ENCODE measurements at regions of chr15 and their contacts with region 1.

Region 1: GRCh38 chr15:58269455-58270414 is 131.6 kb downstream of the AQP9 start:
- DNase-seq: peak; percentile 72
- ATAC-seq: peak; percentile 91
- H3K4me3 ChIP-seq: no peak overlapping the region
- H3K27ac ChIP-seq: peak overlapping the region; percentile 34
- H3K4me1 ChIP-seq: peaks cover 17% of the 10 kb centered on the region
- H3K27me3 ChIP-seq: no peaks in the 10 kb centered on the region
- CTCF ChIP-seq: peak; percentile 86

Region 2: DNA sequence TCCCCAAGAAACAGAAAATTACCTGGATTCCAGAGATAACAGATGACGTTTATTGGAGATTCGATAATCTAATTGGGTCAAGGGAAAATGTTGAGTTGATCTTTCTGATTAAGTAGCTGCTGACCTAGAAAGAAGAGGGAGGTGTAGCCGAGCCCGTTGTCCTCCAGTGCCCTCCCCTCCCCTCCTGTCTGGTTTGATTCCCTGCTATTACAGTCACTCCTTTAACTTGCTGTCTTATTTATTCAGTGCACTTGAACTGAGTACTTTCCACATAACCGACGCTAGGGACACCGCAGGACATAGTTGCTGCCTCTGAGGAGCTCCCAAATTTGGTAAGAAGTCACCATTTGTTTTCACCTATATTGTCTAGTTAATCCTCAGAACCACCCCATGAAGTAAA is 27.9 kb before region 1 on chr15:
- CTCF ChIA-PET with region 1: interaction called, 12 read pairs
- POLR2A ChIA-PET with region 1: no interaction called
- intact Hi-C with region 1: no loop called
- DNase-seq: peak; percentile 15
- ATAC-seq: peak; percentile 67
- H3K4me3 ChIP-seq: no peak overlapping the region
- H3K27ac ChIP-seq: no peak overlapping the region
- H3K4me1 ChIP-seq: no peaks in the 10 kb centered on the region
- H3K27me3 ChIP-seq: no peaks in the 10 kb centered on the region
- CTCF ChIP-seq: peak; percentile 23; the same call in 1 of the 2 replicates

Region 3: DNA sequence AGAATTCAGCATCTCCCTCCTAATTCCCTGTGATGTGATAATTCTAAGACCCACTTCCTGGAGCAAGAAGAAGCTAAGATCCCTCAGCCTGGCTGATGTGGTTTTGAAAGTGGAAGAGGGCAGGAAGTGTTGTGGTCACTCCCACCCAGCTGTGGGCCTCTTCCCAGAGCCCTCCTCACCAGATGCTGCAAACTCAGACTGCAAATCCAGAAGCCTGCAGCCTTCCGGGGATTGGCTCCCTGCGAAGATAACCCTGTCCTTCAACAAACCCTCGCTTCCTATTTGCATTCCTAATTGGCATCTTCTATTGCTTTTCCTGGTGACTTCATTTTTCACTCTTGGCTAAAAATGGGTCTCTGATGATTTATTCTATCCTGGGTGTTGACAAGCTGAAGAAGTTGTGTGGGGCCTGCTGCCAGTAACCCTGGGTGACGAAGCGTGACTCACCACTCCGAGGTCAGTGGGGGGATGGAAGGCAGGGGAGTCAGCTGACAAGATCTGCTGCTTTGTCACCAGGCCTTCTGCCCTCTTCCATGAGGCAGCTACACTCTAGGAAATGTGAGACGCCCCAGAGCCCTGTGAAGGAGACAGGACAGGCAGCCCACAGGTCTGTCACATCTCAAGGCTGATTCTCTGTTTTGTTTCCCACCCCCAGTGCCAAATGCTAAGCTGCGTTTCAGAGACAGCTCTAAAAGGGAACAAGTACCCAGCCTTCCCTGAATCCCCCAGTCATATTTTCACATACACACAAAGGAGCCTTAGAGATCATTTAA is 62.4 kb after region 1 on chr15:
- CTCF ChIA-PET with region 1: no interaction called
- POLR2A ChIA-PET with region 1: interaction called, 5 read pairs
- intact Hi-C with region 1: loop called (anchors 1 kb)
- DNase-seq: peak; percentile 97
- ATAC-seq: peak; percentile 85
- H3K4me3 ChIP-seq: peak overlapping the region; percentile 43
- H3K27ac ChIP-seq: peak overlapping the region; percentile 100
- H3K4me1 ChIP-seq: peaks cover 43% of the 10 kb centered on the region
- H3K27me3 ChIP-seq: no peaks in the 10 kb centered on the region
- CTCF ChIP-seq: no peak

Region 4: GRCh38 chr15:58608129-58608590 is 338.4 kb after region 1 on chr15:
- CTCF ChIA-PET with region 1: interaction called, 5 read pairs
- POLR2A ChIA-PET with region 1: no interaction called
- intact Hi-C with region 1: loop called (anchors 10 kb)
- DNase-seq: no peak
- ATAC-seq: no peak
- H3K4me3 ChIP-seq: no peak overlapping the region
- H3K27ac ChIP-seq: no peak overlapping the region
- H3K4me1 ChIP-seq: peaks cover 29% of the 10 kb centered on the region
- H3K27me3 ChIP-seq: no peaks in the 10 kb centered on the region
- CTCF ChIP-seq: no peak

Region 5: GRCh38 chr15:58749532-58750337 is 480.0 kb after region 1 on chr15 and contains the start of gene ADAM10:
- CTCF ChIA-PET with region 1: interaction called, 4 read pairs
- POLR2A ChIA-PET with region 1: no interaction called
- intact Hi-C with region 1: loop called (anchors 5 kb)
- DNase-seq: peak; percentile 98
- ATAC-seq: peak; percentile 93
- H3K4me3 ChIP-seq: peak within 1 kb of the TSS; percentile 80
- H3K27ac ChIP-seq: peak within 1 kb of the TSS; percentile 74
- H3K4me1 ChIP-seq: 0 out of 2 replicates have a peak, but pooled peaks cover 3% of the 10 kb centered on the region
- H3K27me3 ChIP-seq: no peaks in the 10 kb centered on the region
- CTCF ChIP-seq: no peak
- total RNA-seq, gene ADAM10: 91.3 and 96.8 TPM in 2 replicates

Region 6: DNA sequence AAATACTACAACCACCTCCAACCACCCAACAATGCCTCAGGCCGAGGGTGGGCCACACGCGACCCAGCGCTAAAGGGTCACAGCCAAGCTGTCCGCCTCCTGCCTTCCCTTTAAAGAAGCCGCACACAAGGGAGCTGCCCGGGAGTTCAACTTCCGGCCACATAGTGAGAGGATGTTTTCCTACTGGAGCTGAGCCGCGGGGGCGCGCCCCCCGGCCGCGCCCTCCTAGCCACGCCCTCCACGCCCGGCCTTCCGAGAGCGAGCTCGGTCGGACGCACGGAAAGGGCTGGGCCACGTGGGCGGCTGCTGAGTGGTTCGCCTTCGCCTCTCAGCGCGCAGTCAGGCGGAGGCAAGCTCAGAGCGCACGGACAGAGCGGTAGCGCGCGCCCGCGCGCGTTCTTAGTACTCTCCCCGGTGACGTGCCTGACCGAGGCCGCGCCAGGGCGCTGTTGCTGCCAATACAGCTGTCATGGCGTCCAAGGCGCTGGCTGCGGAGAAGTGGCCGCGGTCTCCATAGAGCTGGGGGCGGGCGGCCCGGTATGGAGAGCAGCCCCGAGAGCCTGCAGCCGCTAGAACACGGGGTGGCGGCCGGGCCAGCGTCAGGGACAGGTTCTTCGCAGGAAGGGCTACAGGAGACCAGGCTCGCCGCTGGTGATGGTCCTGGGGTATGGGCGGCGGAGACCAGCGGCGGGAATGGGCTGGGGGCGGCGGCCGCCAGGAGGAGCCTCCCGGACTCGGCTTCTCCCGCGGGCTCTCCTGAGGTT is 501.3 kb after region 1 on chr15 and contains the start of gene MINDY2:
- CTCF ChIA-PET with region 1: interaction called, 3 read pairs
- POLR2A ChIA-PET with region 1: no interaction called
- intact Hi-C with region 1: loop called (anchors 5 kb)
- DNase-seq: peak; percentile 97
- ATAC-seq: peak; percentile 93
- H3K4me3 ChIP-seq: peak within 1 kb of the TSS; percentile 96
- H3K27ac ChIP-seq: peak within 1 kb of the TSS; percentile 60
- H3K4me1 ChIP-seq: peaks cover 15% of the 10 kb centered on the region
- H3K27me3 ChIP-seq: no peaks in the 10 kb centered on the region
- CTCF ChIP-seq: peak; percentile 24; the same call in 1 of the 2 replicates
- total RNA-seq, gene MINDY2: 4.7 and 9.3 TPM in 2 replicates

Measured in PC-3 (cell line).